ENCODE measurements at regions of chr15 and their contacts with region 1.

Region 1: DNA sequence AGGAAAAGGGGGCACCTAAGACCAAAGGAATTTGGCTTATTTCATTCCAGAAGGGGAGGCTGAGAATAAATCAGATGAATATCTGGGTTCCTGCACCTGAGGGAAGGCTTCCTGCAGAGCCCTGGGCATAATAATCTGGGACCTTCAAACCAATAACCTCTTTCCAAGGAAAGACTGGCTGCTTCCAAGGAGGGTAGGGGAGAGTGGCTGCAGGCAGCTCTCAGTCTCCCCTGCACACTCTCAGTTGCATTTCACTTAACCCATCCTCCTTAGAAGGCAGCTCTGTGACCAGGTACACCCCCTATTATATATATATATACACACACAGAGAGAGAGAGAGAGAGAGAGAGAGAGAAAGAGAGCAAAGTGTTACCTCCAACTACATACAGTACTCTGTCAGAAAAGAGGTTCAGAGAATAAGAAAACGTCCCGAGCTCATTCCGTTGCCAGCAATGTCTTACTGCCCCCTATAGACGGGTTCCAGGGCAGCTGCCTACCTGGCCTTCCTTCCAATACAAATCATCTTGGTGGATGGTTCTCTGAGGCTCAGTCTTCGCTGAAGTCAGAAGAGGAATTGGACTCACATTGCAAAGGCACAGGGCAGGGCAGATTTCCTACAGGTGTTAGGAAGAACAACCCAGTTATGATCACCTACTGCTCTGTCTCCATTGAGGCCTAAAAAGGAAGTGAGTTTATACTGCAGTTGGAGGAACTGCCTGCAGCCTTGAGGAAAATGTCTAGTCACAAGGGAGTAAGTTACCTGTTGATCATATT is 26.1 kb downstream of the CAPN3 start:
- DNase-seq: no peak
- ATAC-seq: peak; percentile 26

Region 2: GRCh38 chr15:42273102-42273899 is 112.1 kb before region 1 on chr15 and contains the starts of genes GANC and TMEM87A:
- intact Hi-C with region 1: loop called (anchors 5 kb)
- DNase-seq: peak; percentile 98
- ATAC-seq: peak; percentile 99
- total RNA-seq, gene GANC: 16.3 TPM
- total RNA-seq, gene TMEM87A: 19.0 TPM

Region 3: DNA sequence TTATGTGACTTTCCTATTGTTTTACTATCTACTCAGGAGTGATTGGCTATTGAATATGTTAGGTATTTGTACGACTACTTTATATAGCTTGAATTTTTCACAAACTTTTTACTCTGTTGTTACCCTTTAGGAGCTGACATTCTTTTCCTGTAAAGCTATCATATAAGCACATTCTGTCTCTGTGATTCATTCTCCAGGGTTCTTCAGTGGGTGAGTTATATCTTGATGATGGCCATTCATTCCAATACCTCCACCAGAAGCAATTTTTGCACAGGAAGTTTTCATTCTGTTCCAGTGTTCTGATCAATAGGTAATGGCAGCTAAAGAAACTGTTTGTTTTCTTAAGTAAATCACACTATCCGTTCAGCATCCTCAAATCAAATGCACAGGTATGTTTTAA is 36.2 kb before region 1 on chr15:
- intact Hi-C with region 1: no loop called
- DNase-seq: no peak
- ATAC-seq: no peak